Activated CD8-positive, alpha-beta memory T cell treated with anti-CD3 and anti-CD28 coated beads, Interleukin-2, amount 10 ng/mL, durations not matched to agents 7 days and 5 days (primary cell): ENCODE measurements at regions of chr12 and their contacts with region 1.

Region 1: DNA sequence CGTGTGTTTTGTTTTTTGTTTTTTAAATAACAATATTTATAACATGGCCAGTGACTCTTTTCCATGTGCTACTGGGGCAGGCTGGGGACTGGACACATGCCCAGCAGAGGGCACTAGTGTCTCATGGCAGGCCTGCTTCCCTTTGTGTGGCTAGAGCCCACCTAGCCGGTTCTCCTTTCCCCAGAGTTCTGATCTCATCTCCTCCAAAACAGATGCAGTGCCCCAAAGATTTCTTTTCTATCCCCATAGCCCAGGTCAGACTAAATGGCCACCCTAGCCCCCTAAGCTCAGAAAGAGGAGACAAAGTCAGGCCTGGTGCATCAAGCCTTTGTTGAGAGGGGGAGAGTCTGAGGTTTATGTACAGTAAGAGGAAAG is 21.2 kb downstream of the PRPF40B start:
- DNase-seq: peak; percentile 88
- ATAC-seq: peak; percentile 96
- H3K4me3 Mint-ChIP-seq: no peak overlapping the region
- H3K27ac Mint-ChIP-seq: peak overlapping the region; percentile 80
- H3K4me1 Mint-ChIP-seq: peaks cover 14% of the 10 kb centered on the region
- H3K27me3 Mint-ChIP-seq: no peaks in the 10 kb centered on the region

Region 2: DNA sequence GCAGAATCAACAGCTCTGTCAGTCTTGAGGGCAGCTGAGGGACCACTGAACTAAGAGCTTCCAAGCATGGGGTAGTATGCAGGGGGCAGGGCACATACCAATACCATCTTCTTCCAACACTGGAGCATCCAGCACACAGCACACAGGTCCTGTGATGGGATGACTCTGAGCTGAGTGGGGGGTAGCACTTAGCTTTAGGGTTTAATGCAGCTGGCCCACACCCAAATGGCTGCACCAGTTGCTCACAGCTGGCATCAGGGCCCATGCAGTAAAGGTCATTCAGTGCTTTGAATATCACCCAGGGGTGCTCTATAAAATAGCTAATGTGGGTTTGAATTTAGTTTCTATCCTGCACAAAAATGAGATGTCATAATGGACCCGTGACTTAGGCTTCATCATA is 40.9 kb before region 1 on chr12:
- CTCF ChIA-PET with region 1: no interaction called
- DNase-seq: no peak
- ATAC-seq: no peak
- H3K4me3 Mint-ChIP-seq: no peak overlapping the region
- H3K27ac Mint-ChIP-seq: no peak overlapping the region
- H3K4me1 Mint-ChIP-seq: peaks cover 6% of the 10 kb centered on the region
- H3K27me3 Mint-ChIP-seq: peaks cover 4% of the 10 kb centered on the region

Region 3: DNA sequence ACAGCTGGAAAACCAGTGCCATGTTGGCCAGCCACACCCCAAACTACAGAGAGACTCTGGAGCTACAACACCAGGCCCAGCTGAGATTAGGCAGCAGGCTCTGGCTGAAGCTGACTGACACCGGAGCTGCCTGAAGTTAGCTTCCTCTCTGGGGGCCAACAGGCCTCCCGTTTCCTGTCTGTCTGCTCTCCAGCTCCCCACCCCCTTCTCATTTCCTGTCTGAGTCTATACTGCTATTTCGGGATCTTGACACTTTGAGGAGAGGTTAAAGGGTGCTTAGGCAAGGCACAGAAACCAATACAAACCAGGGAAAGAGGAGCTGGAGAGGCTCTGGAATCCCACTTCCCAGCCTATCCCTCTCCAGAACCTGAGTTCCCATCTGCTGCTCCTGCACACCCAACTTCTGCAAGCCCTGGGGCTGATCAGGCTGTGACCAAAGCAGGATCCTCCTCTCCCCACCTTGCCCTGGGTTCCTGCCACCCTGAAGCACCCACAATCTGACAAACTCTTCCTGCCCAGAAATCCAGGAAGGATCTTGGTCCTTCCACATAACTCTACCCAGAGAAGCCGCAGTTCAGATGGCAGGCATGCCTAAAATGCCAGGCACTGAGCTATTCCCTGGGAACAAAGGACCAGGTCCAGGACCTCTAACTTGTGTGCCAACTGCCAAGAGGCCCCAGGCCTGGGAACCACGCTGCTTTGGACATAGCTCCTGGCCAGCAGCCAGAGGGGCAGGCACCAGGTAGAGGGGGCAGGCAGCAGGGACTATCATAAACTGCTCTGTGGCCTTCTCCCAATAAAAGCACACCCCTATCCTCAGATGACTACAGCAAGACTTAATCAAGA is 18.6 kb after region 1 on chr12:
- CTCF ChIA-PET with region 1: interaction called, 20 read pairs
- DNase-seq: peak; percentile 90
- ATAC-seq: peak; percentile 98
- H3K4me3 Mint-ChIP-seq: peak overlapping the region; percentile 48
- H3K27ac Mint-ChIP-seq: peak overlapping the region; percentile 94
- H3K4me1 Mint-ChIP-seq: peaks cover 62% of the 10 kb centered on the region
- H3K27me3 Mint-ChIP-seq: no peaks in the 10 kb centered on the region

Region 4: DNA sequence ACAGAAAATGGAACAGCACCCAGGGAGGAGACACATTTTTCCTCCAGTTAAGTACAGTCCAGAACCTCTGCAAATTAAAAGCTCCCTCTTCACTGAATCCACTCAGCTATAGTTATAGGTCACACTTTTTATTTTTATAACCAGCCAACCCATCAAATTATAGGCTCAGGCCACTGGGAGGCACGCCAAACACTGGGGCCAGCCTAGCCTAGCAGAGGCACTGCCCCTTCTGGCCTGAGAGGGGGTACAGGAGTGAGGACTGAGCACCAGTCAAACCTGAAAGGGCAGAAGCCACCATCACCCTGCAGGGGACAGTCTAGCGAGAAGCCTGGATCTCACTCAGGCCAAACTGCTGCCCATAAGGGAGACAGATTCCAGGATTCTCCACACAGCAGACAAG is 43.3 kb after region 1 on chr12:
- CTCF ChIA-PET with region 1: interaction called, 16 read pairs
- DNase-seq: no peak
- ATAC-seq: no peak
- H3K4me3 Mint-ChIP-seq: no peak overlapping the region
- H3K27ac Mint-ChIP-seq: no peak overlapping the region
- H3K4me1 Mint-ChIP-seq: peaks cover 31% of the 10 kb centered on the region
- H3K27me3 Mint-ChIP-seq: no peaks in the 10 kb centered on the region

Region 5: GRCh38 chr12:49698619-49699545 is 54.3 kb after region 1 on chr12:
- CTCF ChIA-PET with region 1: interaction called, 185 read pairs
- DNase-seq: peak; percentile 79
- ATAC-seq: peak; percentile 81
- H3K4me3 Mint-ChIP-seq: peak overlapping the region; percentile 66
- H3K27ac Mint-ChIP-seq: peak overlapping the region; percentile 92
- H3K4me1 Mint-ChIP-seq: peaks cover 41% of the 10 kb centered on the region
- H3K27me3 Mint-ChIP-seq: no peaks in the 10 kb centered on the region